ENCODE measurements at regions of chr6 and their contacts with region 1.

Region 1: GRCh38 chr6:112806163-112806900 is 459.2 kb downstream of the RFPL4B start:
- DNase-seq: no peak
- ATAC-seq: no peak
- H3K4me3 Mint-ChIP-seq: no peak overlapping the region
- H3K27ac Mint-ChIP-seq: no peak overlapping the region
- H3K4me1 Mint-ChIP-seq: no peaks in the 10 kb centered on the region
- H3K27me3 Mint-ChIP-seq: no peaks in the 10 kb centered on the region

Region 2: GRCh38 chr6:112511441-112511840 is 294.9 kb before region 1 on chr6:
- CTCF ChIA-PET with region 1: no interaction called
- POLR2A ChIA-PET with region 1: no interaction called
- intact Hi-C with region 1: no loop called
- DNase-seq: no peak
- ATAC-seq: no peak
- H3K4me3 Mint-ChIP-seq: no peak overlapping the region
- H3K27ac Mint-ChIP-seq: no peak overlapping the region
- H3K4me1 Mint-ChIP-seq: no peaks in the 10 kb centered on the region
- H3K27me3 Mint-ChIP-seq: peaks cover 10% of the 10 kb centered on the region

Region 3: GRCh38 chr6:112636650-112637262 is 169.6 kb before region 1 on chr6:
- CTCF ChIA-PET with region 1: no interaction called
- POLR2A ChIA-PET with region 1: no interaction called
- intact Hi-C with region 1: no loop called
- DNase-seq: no peak
- ATAC-seq: no peak
- H3K4me3 Mint-ChIP-seq: no peak overlapping the region
- H3K27ac Mint-ChIP-seq: no peak overlapping the region
- H3K4me1 Mint-ChIP-seq: no peaks in the 10 kb centered on the region
- H3K27me3 Mint-ChIP-seq: peaks cover 1% of the 10 kb centered on the region

Region 4: DNA sequence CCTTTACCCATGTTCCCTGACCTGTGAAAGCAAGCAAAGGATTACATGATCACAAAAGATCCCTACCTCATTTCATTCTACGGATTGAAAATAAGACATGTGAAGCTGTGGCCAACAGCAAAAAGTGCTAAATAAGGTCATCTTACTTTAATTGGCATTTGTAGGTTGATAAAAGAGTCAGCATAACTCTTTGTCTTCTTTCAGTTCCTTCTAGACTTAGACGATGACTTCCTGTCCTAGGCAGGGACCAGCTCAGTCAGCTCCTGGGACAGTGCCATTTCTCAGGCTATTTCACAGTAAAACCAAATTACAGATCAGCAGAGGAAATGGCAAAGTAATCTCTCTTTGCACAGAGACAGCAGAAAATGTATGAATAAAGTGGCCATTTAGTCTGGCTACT is 21.5 kb after region 1 on chr6:
- CTCF ChIA-PET with region 1: no interaction called
- POLR2A ChIA-PET with region 1: no interaction called
- intact Hi-C with region 1: loop called in 1 of 2 experiments (anchors 1 kb)
- DNase-seq: no peak
- ATAC-seq: no peak
- H3K4me3 Mint-ChIP-seq: no peak overlapping the region
- H3K27ac Mint-ChIP-seq: no peak overlapping the region
- H3K4me1 Mint-ChIP-seq: no peaks in the 10 kb centered on the region
- H3K27me3 Mint-ChIP-seq: no peaks in the 10 kb centered on the region

Region 5: DNA sequence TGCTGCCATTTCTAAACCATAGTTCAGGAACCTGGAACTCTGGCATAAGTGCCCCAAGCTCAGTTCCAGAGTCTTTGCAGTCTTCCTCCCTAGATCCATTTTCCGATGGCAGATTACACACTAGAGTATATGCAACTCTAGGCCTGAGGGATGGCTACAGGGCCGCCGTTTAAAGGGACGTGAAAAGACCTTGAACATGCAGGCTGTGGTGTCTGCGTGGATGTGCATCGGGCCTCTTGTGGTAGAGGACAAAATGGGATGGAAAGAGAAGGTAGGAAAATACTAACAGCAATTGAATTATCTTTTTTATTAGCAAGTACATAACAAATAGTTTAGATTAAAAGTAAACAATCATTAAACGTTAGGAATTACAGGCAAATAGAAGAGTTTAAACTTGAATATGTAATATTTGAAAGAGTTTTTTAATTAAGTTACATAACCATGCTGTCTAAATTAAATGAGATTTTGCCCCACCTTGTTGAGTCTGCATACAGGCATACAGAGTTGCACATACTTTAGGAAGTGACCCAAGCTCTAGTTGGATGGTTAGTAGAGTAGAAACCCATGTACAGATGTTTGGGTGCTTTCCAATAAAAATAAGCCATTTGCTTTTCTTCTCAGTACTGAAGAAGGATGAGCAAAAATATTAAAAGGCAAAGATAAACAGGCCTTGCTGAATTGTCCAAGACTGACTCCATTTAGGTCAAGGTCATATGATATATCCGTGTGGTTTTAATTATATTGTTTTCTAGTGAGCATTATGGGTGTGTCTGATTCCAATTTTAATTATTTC is 129.9 kb after region 1 on chr6:
- CTCF ChIA-PET with region 1: no interaction called
- POLR2A ChIA-PET with region 1: no interaction called
- intact Hi-C with region 1: no loop called
- DNase-seq: no peak
- ATAC-seq: no peak
- H3K4me3 Mint-ChIP-seq: no peak overlapping the region
- H3K27ac Mint-ChIP-seq: no peak overlapping the region
- H3K4me1 Mint-ChIP-seq: no peaks in the 10 kb centered on the region
- H3K27me3 Mint-ChIP-seq: no peaks in the 10 kb centered on the region

Measured in activated CD4-positive, alpha-beta T cell treated with anti-CD3 and anti-CD28 coated beads for 36 hours (primary cell).